ENCODE measurements at regions of chr12 and their contacts with region 1.

Region 1: GRCh38 chr12:55996715-55997534 is at the start of gene SUOX:
- DNase-seq: peak; percentile 99
- H3K4me3 ChIP-seq: peak within 1 kb of the TSS; percentile 65 to 73 (median 68)
- H3K27ac ChIP-seq: peak within 1 kb of the TSS; percentile 81 to 90 (median 81)
- H3K4me1 ChIP-seq: peaks cover 9 to 26% (median 19%) of the 10 kb centered on the region in 4 donors
- H3K27me3 ChIP-seq: no peaks in the 10 kb centered on the region
- CTCF ChIP-seq: no peak
- EP300 ChIP-seq: no peak
- POLR2A ChIP-seq: no peak
- total RNA-seq, gene SUOX: 18.3 to 29.0 (median 25.3) TPM

Region 2: DNA sequence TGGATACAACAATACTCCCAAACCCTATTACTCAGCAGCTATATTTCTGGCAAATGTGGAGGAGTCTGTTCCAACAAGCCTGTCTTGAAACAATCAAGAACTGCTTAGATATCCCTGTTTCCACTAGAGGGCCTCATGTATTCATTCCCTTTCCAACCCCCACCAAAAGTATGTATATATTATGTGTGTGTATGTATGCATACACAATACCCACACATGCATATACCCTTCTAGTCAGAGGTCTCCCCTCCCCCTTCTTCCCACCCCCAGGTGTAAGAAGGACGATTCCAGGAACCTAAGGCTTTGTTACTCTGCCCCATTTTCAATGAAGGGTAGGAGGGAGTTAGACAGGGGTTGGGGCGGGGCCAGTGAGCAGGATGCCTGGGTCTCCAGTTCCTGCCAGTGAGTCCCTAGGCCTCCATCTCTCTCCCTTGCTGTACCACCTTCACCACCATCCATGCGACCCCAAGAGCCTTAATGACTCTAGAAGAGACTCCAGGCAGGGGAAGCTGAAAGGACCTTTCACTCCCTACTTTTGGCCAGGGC is 66.1 kb before region 1 on chr12 and contains the start of gene DGKA:
- intact Hi-C with region 1: no loop called
- DNase-seq: no peak
- H3K4me3 ChIP-seq: peak within 1 kb of the TSS; percentile 67 to 82 (median 76)
- H3K27ac ChIP-seq: peak within 1 kb of the TSS; percentile 86 to 97 (median 88)
- H3K4me1 ChIP-seq: peaks cover 40 to 82% (median 66%) of the 10 kb centered on the region in 4 donors
- H3K27me3 ChIP-seq: no peaks in the 10 kb centered on the region
- CTCF ChIP-seq: peak; percentile 39 to 59 (median 49)
- EP300 ChIP-seq: no peak
- POLR2A ChIP-seq: no peak
- total RNA-seq, gene DGKA: 18.7 to 39.7 (median 24.7) TPM

Region 3: GRCh38 chr12:55946553-55946952 is 50.4 kb before region 1 on chr12:
- intact Hi-C with region 1: no loop called
- DNase-seq: no peak
- H3K4me3 ChIP-seq: no peak overlapping the region
- H3K27ac ChIP-seq: no peak overlapping the region
- H3K4me1 ChIP-seq: no peaks in the 10 kb centered on the region
- H3K27me3 ChIP-seq: no peaks in the 10 kb centered on the region
- CTCF ChIP-seq: no peak
- EP300 ChIP-seq: no peak
- POLR2A ChIP-seq: no peak

Region 4: DNA sequence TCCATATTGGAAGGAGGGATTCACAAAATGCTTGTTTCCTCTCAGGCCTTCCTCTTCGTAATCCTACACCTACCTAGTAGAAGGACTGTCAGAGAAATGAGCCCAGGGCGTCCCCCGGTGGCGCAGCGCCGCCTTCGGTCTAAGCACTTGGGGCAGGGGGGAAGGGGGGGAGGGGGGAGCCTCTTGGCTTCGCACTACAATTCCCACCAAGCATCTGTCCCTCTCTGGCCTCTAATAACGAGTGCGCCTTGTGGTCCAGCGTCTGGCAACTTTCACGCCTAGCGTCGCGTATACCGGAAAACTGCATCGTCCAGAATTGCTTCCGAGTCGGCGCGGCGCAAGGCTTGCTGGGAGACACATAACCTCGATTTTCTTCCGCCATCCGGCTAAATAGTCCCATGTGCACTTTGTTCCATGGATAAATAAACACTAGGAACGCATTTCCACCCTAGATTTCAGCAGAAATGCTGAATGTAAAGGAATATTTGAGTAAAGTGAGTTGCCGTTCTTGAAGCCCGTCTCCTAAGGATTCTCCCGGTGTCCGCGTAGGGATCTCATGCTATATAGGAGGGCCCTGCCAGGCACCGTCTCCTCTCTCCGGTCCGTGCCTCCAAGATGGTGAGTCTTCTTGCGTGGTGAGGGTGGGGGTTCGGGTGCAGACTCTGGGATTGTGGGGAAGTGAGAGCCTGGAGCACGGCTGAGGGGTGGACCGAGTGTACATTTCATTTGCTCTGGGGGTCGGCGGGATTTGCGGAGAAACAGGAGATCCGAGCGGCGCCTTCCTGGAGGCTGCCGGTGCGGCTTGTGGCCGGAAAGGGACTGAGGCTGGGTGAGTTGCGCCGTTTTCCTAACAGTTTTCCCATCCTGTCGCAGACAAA is 44.9 kb after region 1 on chr12 and contains the start of gene RPS26:
- intact Hi-C with region 1: loop called (anchors 2 kb)
- DNase-seq: peak; percentile 99
- H3K4me3 ChIP-seq: peak within 1 kb of the TSS; percentile 69 to 87 (median 82)
- H3K27ac ChIP-seq: peak within 1 kb of the TSS; percentile 86 to 96 (median 89)
- H3K4me1 ChIP-seq: peaks cover 15 to 24% (median 20%) of the 10 kb centered on the region in 4 donors
- H3K27me3 ChIP-seq: no peaks in the 10 kb centered on the region
- CTCF ChIP-seq: peak; percentile 13 to 55 (median 54)
- EP300 ChIP-seq: no peak
- POLR2A ChIP-seq: peak; percentile 93
- total RNA-seq, gene RPS26: 104 to 1,982 (median 577) TPM

Measured in esophagus muscularis mucosa (tissue), 4 donors.